CD8-positive, alpha-beta T cell (primary cell): ENCODE measurements at regions of chr2 and their contacts with region 1.

Region 1: DNA sequence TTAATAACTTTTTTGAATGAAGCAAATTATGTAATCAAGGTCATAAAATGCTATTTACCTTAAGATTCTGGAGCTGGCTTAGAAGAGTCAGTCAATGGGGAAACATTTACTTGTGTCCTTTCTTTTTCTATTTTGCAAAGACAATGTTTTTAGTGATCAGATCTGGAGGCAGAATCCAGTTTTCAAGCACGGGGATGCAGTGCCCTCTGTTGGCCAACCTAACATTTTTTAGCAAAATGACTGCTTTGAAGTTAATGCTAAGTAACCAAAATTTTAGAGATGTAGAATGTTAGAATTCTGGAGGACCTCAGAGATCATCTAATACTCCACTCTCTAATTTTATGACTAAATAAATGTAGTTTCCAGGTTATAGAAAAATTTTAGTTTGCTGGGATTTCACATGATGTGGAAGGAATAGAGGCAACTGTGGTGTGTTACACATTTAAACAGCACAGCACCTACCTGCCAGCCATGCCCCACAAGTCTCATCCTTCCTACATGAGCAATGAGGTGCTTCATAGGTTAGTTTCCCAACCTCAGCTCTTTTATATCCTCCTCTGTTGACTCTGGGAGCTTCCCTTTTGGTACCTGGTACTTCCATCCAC is 23.6 kb upstream of the SLC9A4 start:
- DNase-seq: peak; percentile 36 to 74 (median 61)
- ATAC-seq: no peak
- H3K4me3 ChIP-seq: no peak overlapping the region
- H3K4me3 Mint-ChIP-seq: no peak overlapping the region
- H3K27ac ChIP-seq: no peak overlapping the region
- H3K27ac Mint-ChIP-seq: no peak overlapping the region
- H3K4me1 ChIP-seq: no peaks in the 10 kb centered on the region
- H3K4me1 Mint-ChIP-seq: peaks cover 3% of the 10 kb centered on the region
- H3K27me3 ChIP-seq: no peaks in the 10 kb centered on the region
- H3K27me3 Mint-ChIP-seq: no peaks in the 10 kb centered on the region
- CTCF ChIP-seq: peak; percentile 71

Region 2: GRCh38 chr2:100453853-100454252 is 1995.6 kb before region 1 on chr2:
- CTCF ChIA-PET with region 1: no interaction called
- POLR2A ChIA-PET with region 1: no interaction called
- intact Hi-C with region 1: loop called in 1 of 2 experiments (anchors 5 kb)
- DNase-seq: no peak
- ATAC-seq: no peak
- H3K4me3 ChIP-seq: no peak overlapping the region
- H3K4me3 Mint-ChIP-seq: no peak overlapping the region
- H3K27ac ChIP-seq: no peak overlapping the region
- H3K27ac Mint-ChIP-seq: no peak overlapping the region
- H3K4me1 ChIP-seq: no peaks in the 10 kb centered on the region
- H3K4me1 Mint-ChIP-seq: no peaks in the 10 kb centered on the region
- H3K27me3 ChIP-seq: no peaks in the 10 kb centered on the region
- H3K27me3 Mint-ChIP-seq: peaks cover 13% of the 10 kb centered on the region
- CTCF ChIP-seq: no peak

Region 3: GRCh38 chr2:101883863-101884262 is 565.6 kb before region 1 on chr2:
- CTCF ChIA-PET with region 1: interaction called, 6 read pairs
- POLR2A ChIA-PET with region 1: no interaction called
- intact Hi-C with region 1: loop called (anchors 1 to 5 kb)
- DNase-seq: peak in 4 of 9 experiments; percentile 13 to 66 (median 42)
- ATAC-seq: peak; percentile 64
- H3K4me3 ChIP-seq: no peak overlapping the region
- H3K4me3 Mint-ChIP-seq: no peak overlapping the region
- H3K27ac ChIP-seq: no peak overlapping the region
- H3K27ac Mint-ChIP-seq: no peak overlapping the region
- H3K4me1 ChIP-seq: no peaks in the 10 kb centered on the region
- H3K4me1 Mint-ChIP-seq: peaks cover 2% of the 10 kb centered on the region
- H3K27me3 ChIP-seq: no peaks in the 10 kb centered on the region
- H3K27me3 Mint-ChIP-seq: no peaks in the 10 kb centered on the region
- CTCF ChIP-seq: peak; percentile 58

Region 4: DNA sequence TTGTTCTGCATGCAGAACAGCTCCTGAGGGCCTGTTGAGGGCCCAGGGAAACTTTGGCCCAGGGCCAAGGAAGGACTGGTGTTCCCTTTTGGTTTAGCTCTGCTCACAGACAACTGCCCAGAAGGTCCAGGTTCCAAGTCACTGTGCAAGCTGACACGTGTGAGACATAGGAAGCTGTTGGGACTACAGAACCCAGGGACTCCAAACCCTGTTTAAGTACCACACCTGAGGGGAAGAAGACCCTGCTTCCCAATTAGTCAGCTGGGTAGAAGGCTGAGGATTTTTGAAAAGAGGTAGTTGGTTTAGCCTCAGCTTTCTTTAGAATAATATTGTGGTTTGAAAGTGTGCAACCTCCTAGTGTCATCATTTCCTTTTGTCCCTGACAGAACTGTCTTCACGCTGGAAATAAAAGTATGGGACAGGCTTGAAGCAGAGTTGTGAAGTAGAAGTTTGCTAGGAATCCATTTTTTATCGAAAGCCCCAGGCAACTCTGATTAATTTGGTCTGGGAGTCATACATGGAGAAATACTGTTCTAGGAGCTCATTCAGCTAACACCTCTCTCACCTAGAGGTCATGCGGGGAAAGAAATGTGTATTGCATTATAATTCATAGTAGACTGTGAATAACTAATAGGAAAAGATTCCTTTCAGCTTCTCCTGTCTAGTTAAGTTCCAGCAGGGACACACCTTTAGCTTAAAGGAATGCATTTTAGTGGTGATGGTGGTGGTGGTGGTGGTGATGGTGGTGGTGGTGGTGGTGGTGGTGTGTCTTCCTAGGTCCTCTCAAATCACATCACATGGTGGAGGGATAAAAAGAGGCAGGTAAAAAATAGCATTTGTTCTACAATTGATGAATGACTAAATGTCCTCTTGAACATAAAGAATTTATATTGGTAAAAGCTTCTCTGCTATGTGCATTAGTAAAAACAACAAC is 157.9 kb before region 1 on chr2:
- CTCF ChIA-PET with region 1: no interaction called
- POLR2A ChIA-PET with region 1: no interaction called
- intact Hi-C with region 1: no loop called
- DNase-seq: no peak
- ATAC-seq: no peak
- H3K4me3 ChIP-seq: no peak overlapping the region
- H3K4me3 Mint-ChIP-seq: no peak overlapping the region
- H3K27ac ChIP-seq: no peak overlapping the region
- H3K27ac Mint-ChIP-seq: no peak overlapping the region
- H3K4me1 ChIP-seq: no peaks in the 10 kb centered on the region
- H3K4me1 Mint-ChIP-seq: peaks cover 6% of the 10 kb centered on the region
- H3K27me3 ChIP-seq: no peaks in the 10 kb centered on the region
- H3K27me3 Mint-ChIP-seq: no peaks in the 10 kb centered on the region
- CTCF ChIP-seq: no peak

Region 5: GRCh38 chr2:102301867-102302362 is 147.6 kb before region 1 on chr2:
- CTCF ChIA-PET with region 1: interaction called, 27 read pairs
- POLR2A ChIA-PET with region 1: no interaction called
- intact Hi-C with region 1: loop called in 1 of 2 experiments (anchors 1 kb)
- DNase-seq: peak; percentile 5 to 79 (median 41)
- ATAC-seq: peak; percentile 85
- H3K4me3 ChIP-seq: no peak overlapping the region
- H3K4me3 Mint-ChIP-seq: peak overlapping the region; percentile 38
- H3K27ac ChIP-seq: no peak overlapping the region
- H3K27ac Mint-ChIP-seq: no peak overlapping the region
- H3K4me1 ChIP-seq: peaks cover 6% of the 10 kb centered on the region
- H3K4me1 Mint-ChIP-seq: peaks cover 12% of the 10 kb centered on the region
- H3K27me3 ChIP-seq: no peaks in the 10 kb centered on the region
- H3K27me3 Mint-ChIP-seq: no peaks in the 10 kb centered on the region
- CTCF ChIP-seq: peak; percentile 50